Prostate gland (tissue), 2 donors: ENCODE measurements at regions of chr15 and their contacts with region 1.

Region 1: DNA sequence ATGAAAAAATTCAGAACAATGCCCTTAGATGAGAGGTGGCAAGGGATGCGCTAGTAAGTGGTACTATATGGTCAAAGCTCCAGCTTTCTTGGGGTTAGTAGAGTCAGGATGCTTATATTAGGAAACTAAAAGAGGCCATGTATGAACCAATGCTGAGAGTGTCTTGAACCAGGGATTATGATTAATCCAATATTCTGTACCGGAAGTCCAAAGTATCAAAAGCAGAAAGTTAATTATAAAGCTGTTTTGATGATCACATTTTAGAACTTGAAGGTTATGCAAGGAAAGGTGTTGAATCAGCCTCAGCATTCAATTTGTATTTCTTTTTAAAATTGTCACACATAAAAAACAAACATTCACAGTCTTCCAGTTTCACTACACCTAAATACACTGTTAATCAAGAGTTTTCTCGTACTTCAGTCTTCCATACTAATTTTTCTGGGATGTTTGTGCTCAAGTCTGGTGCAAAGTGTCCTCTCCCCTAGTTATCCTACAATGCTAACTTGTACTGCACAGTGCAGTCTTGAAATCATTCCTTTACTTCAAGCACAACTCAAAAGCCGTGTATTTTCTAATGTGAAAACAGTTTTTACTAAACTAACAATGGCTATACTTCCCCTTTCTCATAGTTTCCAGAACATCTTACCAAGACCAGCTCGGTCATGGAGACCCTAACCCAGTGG is 10.7 kb upstream of the FAH start:
- DNase-seq: no peak
- H3K4me3 ChIP-seq: no peak overlapping the region
- H3K27ac ChIP-seq: no peak overlapping the region
- H3K4me1 ChIP-seq: no peaks in the 10 kb centered on the region
- H3K27me3 ChIP-seq: no peaks in the 10 kb centered on the region
- CTCF ChIP-seq: no peak
- POLR2A ChIP-seq: no peak

Region 2: GRCh38 chr15:80127911-80128310 is 14.1 kb before region 1 on chr15:
- intact Hi-C with region 1: loop called (anchors 2 kb)
- DNase-seq: no peak
- H3K4me3 ChIP-seq: no peak overlapping the region
- H3K27ac ChIP-seq: no peak overlapping the region
- H3K4me1 ChIP-seq: no peaks in the 10 kb centered on the region
- H3K27me3 ChIP-seq: no peaks in the 10 kb centered on the region
- CTCF ChIP-seq: no peak
- POLR2A ChIP-seq: no peak